GM12878 (cell line): ENCODE measurements at regions of chr2 and their contacts with region 1.

Region 1: GRCh38 chr2:37907501-37908225 is 17.4 kb upstream of the RMDN2 start:
- DNase-seq: no peak
- ATAC-seq: 0 out of 3 replicates have a peak, but pooled peaks have one; percentile 17
- H3K4me3 ChIP-seq: no peak overlapping the region
- H3K27ac ChIP-seq: no peak overlapping the region
- H3K4me1 ChIP-seq: no peaks in the 10 kb centered on the region
- H3K27me3 ChIP-seq: no peaks in the 10 kb centered on the region
- CTCF ChIP-seq: no peak
- EP300 ChIP-seq: no peak
- POLR2A ChIP-seq: no peak
- RAD21 ChIP-seq: no peak

Region 2: DNA sequence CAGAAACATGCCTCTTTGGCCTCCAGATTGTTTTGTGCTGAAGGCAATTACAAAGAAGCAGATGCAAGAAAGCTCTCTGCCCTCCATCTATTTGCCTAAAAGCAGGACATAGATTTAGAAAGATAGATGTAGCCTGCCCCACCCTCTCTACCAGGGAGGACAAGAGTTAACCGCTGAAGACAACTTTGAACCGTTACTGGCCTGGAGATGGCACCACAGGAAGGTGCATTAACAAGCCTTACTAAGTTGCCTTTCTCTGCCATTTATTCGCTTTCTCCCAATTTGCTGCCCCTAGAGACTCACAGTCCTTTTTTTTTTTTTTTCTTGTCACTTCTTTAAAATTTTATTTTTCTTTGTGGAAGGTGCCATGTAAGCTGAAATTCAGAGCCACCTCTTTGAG is 11.3 kb before region 1 on chr2:
- CTCF ChIA-PET with region 1: interaction called, 6 read pairs
- POLR2A ChIA-PET with region 1: no interaction called
- RAD21 ChIA-PET with region 1: no interaction called
- SMC1A ChIA-PET with region 1: interaction called, 22 read pairs
- in situ Hi-C with region 1: no loop called
- intact Hi-C with region 1: no loop called
- DNase-seq: no peak
- ATAC-seq: no peak
- H3K4me3 ChIP-seq: no peak overlapping the region
- H3K27ac ChIP-seq: no peak overlapping the region
- H3K4me1 ChIP-seq: peaks cover 40% of the 10 kb centered on the region
- H3K27me3 ChIP-seq: no peaks in the 10 kb centered on the region
- CTCF ChIP-seq: peak in 2 of 3 experiments; percentile 5 to 30; a peak in 3 of 6 replicates
- EP300 ChIP-seq: no peak
- POLR2A ChIP-seq: no peak
- RAD21 ChIP-seq: peak; percentile 56